ENCODE measurements at regions of chr3 and their contacts with region 1.

Region 1: GRCh38 chr3:119469381-119470189 is 822 bp downstream of the POGLUT1 start:
- DNase-seq: no peak
- H3K4me3 Mint-ChIP-seq: peak overlapping the region; percentile 94
- H3K27ac Mint-ChIP-seq: peak overlapping the region; percentile 94
- H3K4me1 Mint-ChIP-seq: peaks cover 25% of the 10 kb centered on the region
- H3K27me3 Mint-ChIP-seq: no peaks in the 10 kb centered on the region
- CTCF ChIP-seq: no peak

Region 2: GRCh38 chr3:119331661-119332060 is 137.9 kb before region 1 on chr3:
- CTCF ChIA-PET with region 1: no interaction called
- POLR2A ChIA-PET with region 1: no interaction called
- intact Hi-C with region 1: no loop called
- DNase-seq: no peak
- H3K4me3 Mint-ChIP-seq: no peak overlapping the region
- H3K27ac Mint-ChIP-seq: no peak overlapping the region
- H3K4me1 Mint-ChIP-seq: no peaks in the 10 kb centered on the region
- H3K27me3 Mint-ChIP-seq: no peaks in the 10 kb centered on the region
- CTCF ChIP-seq: no peak

Region 3: GRCh38 chr3:119481079-119481478 is 11.5 kb after region 1 on chr3:
- CTCF ChIA-PET with region 1: interaction called, 5 read pairs
- POLR2A ChIA-PET with region 1: interaction called, 19 read pairs
- intact Hi-C with region 1: no loop called
- DNase-seq: no peak
- H3K4me3 Mint-ChIP-seq: no peak overlapping the region
- H3K27ac Mint-ChIP-seq: peak overlapping the region; percentile 79
- H3K4me1 Mint-ChIP-seq: peaks cover 5% of the 10 kb centered on the region
- H3K27me3 Mint-ChIP-seq: no peaks in the 10 kb centered on the region
- CTCF ChIP-seq: no peak

Measured in MCF 10A (cell line).